Ascending aorta (tissue), 2 donors: ENCODE measurements at regions of chr1 and their contacts with region 1.

Region 1: GRCh38 chr1:161177112-161177935 is at the start of gene B4GALT3:
- DNase-seq: peak in 1 of 2 donors; percentile 94
- H3K4me3 ChIP-seq: peak within 1 kb of the TSS; percentile 79 to 93
- H3K27ac ChIP-seq: peak within 1 kb of the TSS; percentile 87 to 96
- H3K4me1 ChIP-seq: peaks cover 0 to 19% of the 10 kb centered on the region in 2 donors
- H3K27me3 ChIP-seq: no peaks in the 10 kb centered on the region
- CTCF ChIP-seq: no peak
- total RNA-seq, gene B4GALT3: 26.9 TPM

Region 2: GRCh38 chr1:161153679-161154426 is 23.5 kb before region 1 on chr1 and contains the start of gene UFC1:
- intact Hi-C with region 1: loop called (anchors 1 kb)
- DNase-seq: peak in 1 of 2 donors; percentile 91
- H3K4me3 ChIP-seq: peak within 1 kb of the TSS; percentile 76 to 83
- H3K27ac ChIP-seq: peak within 1 kb of the TSS; percentile 91 to 93
- H3K4me1 ChIP-seq: peaks cover 0 to 13% of the 10 kb centered on the region in 2 donors
- H3K27me3 ChIP-seq: no peaks in the 10 kb centered on the region
- CTCF ChIP-seq: no peak
- total RNA-seq, gene UFC1: 3.3 TPM

Region 3: DNA sequence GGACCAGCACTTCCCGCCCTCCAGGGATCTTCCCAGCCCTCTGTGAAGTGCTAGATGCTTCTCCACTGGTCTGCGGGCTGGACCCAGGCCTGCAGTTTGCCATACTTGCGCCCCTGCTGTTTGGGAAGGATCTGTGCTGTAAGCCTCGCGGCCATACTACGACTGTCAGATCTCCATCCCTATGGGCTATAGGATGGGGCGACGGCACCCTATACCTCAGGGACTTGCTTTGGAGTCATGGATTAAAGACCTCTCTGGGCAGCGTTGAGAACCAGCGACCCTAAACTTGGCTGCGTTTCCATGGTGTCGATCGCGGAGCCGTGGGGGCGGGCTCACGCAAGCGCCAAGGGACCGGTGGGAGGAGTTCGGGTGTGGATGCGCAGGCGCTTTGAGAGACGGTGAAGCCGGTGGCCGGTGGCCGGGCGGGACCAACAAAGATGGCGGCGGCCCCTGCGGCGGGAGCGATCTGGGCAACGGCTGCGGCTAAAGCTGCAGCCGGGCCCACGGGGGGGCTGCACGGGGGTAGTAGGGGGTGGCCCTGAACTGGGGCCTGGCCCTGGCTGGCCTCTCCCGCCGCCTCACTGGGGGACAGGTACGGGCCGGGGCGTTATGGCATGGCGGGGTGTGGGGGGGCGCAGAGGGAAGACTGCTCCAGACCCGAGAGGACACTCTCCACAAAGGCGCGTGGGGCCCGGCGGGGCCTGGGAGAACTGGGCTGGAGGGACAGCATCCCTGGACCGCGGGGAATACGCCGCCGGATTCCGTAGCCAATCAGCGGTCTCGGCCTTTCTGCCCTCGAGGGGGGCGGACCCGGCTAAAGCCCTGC is 18.0 kb before region 1 on chr1 and contains the start of gene USP21:
- intact Hi-C with region 1: loop called (anchors 1 kb)
- DNase-seq: peak; percentile 61 to 96
- H3K4me3 ChIP-seq: peak within 1 kb of the TSS; percentile 86 to 92
- H3K27ac ChIP-seq: peak within 1 kb of the TSS; percentile 81 to 83
- H3K4me1 ChIP-seq: peaks cover 0 to 31% of the 10 kb centered on the region in 2 donors
- H3K27me3 ChIP-seq: no peaks in the 10 kb centered on the region
- CTCF ChIP-seq: peak; percentile 9 to 47 (median 37)
- total RNA-seq, gene USP21: 31.9 TPM

Region 4: DNA sequence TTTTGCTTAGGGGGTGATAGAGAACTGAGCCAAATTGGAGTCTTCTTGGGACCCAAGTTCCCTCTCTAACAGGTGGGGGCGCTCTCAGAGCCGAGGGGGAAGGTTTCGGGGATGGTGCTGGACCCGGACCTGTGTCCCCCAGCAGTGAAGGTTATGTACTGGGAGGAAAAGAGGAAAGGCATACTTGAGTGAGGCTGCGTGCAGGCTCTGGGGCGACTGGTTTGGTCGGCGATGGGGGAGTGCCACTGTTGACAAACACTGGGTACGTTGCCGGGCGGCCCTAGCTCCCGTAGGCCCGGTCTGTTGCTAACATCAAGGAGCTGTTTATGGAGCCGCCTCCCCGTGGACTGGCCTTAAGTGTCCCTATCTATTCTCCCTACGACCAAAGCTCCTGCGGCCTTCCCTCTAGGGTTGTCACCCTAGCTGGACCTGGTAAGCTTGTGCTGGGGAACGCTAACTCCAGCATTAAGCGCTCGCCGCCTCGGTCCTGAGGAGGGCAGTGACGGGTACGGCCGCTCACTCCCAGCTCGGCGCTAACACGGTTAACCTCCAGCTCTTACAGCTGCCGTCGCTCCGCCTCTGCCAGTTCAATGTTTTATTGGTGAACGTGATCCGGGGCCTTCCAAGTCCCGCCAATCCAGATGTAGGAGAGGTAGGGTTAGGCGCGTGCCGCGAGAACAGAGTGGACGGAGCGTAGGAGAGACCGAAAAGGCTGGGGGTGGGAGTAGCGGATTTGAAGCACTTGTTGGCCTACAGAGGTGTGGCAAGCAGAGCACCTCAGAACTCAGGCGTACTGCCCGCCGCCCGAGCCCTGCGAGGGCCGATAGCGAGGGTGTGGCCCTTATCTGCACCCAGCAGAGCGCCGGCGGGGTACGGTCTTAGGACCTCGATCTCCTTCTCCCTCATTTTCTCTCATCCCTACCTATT is 11.3 kb before region 1 on chr1 and contains the start of gene PPOX:
- intact Hi-C with region 1: loop called (anchors 1 kb)
- DNase-seq: peak; percentile 94 to 98
- H3K4me3 ChIP-seq: peak within 1 kb of the TSS; percentile 62 to 86
- H3K27ac ChIP-seq: peak within 1 kb of the TSS; percentile 69 to 90
- H3K4me1 ChIP-seq: peaks cover 6 to 12% of the 10 kb centered on the region in 2 donors
- H3K27me3 ChIP-seq: no peaks in the 10 kb centered on the region
- CTCF ChIP-seq: peak; percentile 11 to 48 (median 33)
- total RNA-seq, gene PPOX: 4.8 TPM